BJ (cell line): ENCODE measurements at regions of chr7 and their contacts with region 1.

Region 1: GRCh38 chr7:99990460-99990852 is 14.6 kb upstream of the AZGP1 start:
- DNase-seq: no peak
- H3K4me3 ChIP-seq: no peak overlapping the region
- H3K27me3 ChIP-seq: peaks cover 1% of the 10 kb centered on the region; the same call in 1 of the 2 replicates
- CTCF ChIP-seq: no peak

Region 2: GRCh38 chr7:99918959-99919813 is 71.3 kb before region 1 on chr7 and contains the start of gene TRIM4:
- CTCF ChIA-PET with region 1: interaction called, 111 read pairs
- POLR2A ChIA-PET with region 1: no interaction called
- DNase-seq: peak; percentile 68
- H3K4me3 ChIP-seq: peak within 1 kb of the TSS; percentile 80
- H3K27me3 ChIP-seq: no peaks in the 10 kb centered on the region
- CTCF ChIP-seq: peak; percentile 11; the same call in 1 of the 2 replicates
- polyA plus RNA-seq, gene TRIM4: 18.6 and 25.4 TPM in 2 replicates

Region 3: DNA sequence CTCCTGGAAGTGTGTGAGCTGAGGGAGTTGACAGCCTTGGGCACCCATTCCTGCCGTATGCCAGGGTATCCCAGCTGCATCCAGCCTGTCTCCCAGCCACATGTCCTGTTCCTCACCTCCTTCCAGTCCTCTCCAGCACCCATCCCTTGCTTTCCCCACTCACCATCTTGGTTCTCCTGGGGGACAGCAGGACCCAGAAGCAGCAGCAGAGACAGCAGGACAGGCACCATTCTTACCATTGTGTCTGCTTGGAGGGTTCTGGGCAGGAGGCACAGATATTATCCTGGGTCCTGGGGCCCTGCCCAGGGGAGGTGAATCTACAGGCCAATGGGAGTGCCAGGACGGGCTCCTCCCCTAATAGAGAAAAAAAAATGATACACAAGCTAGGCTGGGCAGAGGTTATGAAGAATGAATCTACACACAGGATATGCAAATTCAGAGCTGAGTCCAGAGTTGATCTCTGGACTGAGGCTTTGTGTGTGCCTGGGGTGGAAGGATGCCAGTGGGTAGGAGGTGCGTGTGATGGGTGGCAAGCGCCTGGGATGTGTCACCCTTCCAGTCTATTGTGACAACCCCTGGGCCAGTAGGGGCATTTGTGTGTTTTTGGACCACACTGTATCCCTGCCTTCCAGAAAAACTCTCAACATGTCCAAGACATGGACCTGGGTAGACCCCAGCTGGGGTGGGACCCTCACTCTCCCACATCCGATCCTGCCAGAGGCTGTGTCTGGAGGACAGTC is 14.5 kb before region 1 on chr7 and contains the start of gene AZGP1:
- CTCF ChIA-PET with region 1: interaction called, 77 read pairs
- POLR2A ChIA-PET with region 1: no interaction called
- DNase-seq: no peak
- H3K4me3 ChIP-seq: no peak within 1 kb of the TSS
- H3K27me3 ChIP-seq: no peaks in the 10 kb centered on the region
- CTCF ChIP-seq: no peak
- polyA plus RNA-seq, gene AZGP1: not detected in 2 replicates

Region 4: DNA sequence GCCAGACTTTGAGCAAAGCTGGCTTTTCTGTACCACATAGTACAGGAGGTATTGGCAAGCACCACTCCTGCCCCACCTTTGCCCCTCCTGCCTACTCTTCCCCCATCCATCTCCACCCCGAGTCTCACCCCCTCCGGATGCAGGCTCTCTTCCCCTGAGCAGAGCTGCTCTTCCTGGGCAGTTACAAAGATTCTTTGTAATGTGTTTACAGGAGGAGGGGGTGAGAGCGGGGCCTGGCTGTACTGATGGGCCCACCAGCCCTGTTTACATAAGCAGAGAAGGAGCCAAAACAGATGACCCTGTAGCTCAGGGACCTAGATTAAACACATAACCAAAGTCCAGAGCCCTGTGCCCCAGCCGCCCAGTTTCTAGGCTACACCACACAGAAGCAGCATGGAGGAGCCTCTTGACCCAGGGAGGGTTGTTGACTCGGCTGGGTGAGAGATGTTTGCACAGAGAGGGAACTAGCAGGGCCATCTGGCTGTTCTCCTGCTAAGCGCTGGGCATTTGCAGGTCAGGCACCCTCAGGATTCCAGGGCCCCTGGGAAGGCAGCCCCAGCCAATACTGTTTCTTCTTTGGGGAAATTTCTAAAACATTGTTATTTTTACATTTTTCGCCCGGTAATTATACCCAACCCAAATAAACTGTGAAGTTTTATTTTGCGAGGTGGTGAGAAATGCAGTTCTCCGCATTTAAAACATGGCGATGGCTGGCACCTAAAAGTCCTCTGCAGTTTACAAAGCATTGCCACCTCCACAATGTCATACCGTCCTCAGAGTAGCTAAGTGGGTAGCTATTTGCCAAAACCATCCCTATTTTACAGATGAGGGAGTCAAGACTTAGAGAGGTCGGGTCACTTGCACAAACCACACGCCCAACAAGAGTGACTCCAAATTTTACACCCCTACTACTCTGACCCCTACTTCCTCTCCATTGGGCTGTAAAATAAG is 13.5 kb after region 1 on chr7:
- CTCF ChIA-PET with region 1: interaction called, 13 read pairs
- POLR2A ChIA-PET with region 1: no interaction called
- DNase-seq: no peak
- H3K4me3 ChIP-seq: no peak overlapping the region
- H3K27me3 ChIP-seq: peaks cover 2% of the 10 kb centered on the region; the same call in 1 of the 2 replicates
- CTCF ChIP-seq: no peak

Region 5: GRCh38 chr7:100126931-100127865 is 136.7 kb after region 1 on chr7 and contains the start of gene MBLAC1:
- CTCF ChIA-PET with region 1: interaction called, 126 read pairs
- POLR2A ChIA-PET with region 1: no interaction called
- DNase-seq: peak; percentile 26
- H3K4me3 ChIP-seq: peak within 1 kb of the TSS; percentile 77
- H3K27me3 ChIP-seq: no peaks in the 10 kb centered on the region
- CTCF ChIP-seq: 0 out of 2 replicates have a peak, but pooled peaks have one; percentile 1
- polyA plus RNA-seq, gene MBLAC1: 1.2 and 1.6 TPM in 2 replicates

Region 6: GRCh38 chr7:100655908-100656674 is 665.6 kb after region 1 on chr7 and contains the start of gene ACTL6B:
- CTCF ChIA-PET with region 1: no interaction called
- POLR2A ChIA-PET with region 1: no interaction called
- DNase-seq: no peak
- H3K4me3 ChIP-seq: no peak within 1 kb of the TSS
- H3K27me3 ChIP-seq: peaks cover 4% of the 10 kb centered on the region
- CTCF ChIP-seq: no peak
- polyA plus RNA-seq, gene ACTL6B: not detected in 2 replicates